MCF 10A (cell line): ENCODE measurements at regions of chr20 and their contacts with region 1.

Region 1: DNA sequence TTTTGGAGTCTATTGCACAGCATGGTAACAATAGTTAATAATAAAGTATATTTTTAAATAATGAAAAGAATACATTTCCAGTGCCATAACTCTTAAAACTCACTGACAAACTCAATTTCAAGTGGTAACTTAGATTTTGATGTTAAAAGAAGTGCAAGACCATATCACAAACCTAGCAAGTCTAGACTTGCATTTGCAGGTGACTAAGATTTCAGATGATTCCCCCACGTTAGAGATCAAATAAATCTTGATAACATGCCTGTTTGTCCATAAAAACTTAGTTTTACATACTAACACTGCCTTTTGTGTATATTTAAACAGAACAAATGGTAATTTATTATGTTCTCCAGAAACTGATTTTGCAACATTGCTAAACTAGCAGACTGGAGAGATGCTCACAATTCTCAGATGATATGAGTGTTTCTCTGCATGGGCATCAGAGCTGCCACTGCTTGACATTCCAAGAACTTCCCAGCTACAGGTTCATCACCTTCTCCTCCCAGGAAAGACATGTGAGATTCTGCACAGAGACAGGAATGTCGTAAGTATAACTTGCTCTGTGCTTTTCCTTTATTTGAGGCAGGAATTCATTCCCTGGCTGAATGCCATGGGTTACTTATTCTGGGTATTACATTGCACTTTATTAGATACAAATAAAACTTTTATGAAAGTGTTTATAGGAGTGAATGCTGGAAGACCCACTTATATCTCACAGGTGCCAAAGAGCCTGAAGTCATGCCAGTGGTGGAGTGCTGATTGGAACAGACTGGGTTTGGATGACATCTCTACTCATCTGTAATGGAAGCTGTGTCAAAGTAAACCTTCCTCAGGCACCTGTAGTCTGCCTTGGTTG is 160.2 kb upstream of the FOXA2 start:
- DNase-seq: peak; percentile 9
- H3K4me3 Mint-ChIP-seq: no peak overlapping the region
- H3K27ac Mint-ChIP-seq: no peak overlapping the region
- H3K4me1 Mint-ChIP-seq: peaks cover 5% of the 10 kb centered on the region
- H3K27me3 Mint-ChIP-seq: no peaks in the 10 kb centered on the region
- CTCF ChIP-seq: no peak

Region 2: DNA sequence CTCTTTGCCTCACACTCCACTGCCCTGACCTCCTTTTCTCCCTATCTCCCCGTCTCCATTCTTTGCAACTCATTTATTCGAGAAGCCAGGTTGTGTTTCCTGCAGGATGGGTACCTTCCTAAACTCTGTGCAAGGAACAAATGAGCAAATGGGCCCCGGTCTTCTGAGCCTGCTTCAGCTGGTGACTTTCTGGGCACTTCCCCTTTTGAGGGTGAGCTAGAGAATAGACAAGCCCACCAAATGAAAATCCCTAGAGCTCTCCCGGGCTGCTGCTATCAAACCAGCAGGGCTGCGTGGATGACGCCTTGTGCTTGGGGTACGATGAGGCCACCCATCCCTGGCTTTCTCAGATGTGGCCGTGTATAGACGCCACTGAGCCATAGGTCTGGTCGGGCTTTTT is 69.2 kb before region 1 on chr20:
- CTCF ChIA-PET with region 1: no interaction called
- POLR2A ChIA-PET with region 1: no interaction called
- intact Hi-C with region 1: no loop called
- DNase-seq: no peak
- H3K4me3 Mint-ChIP-seq: no peak overlapping the region
- H3K27ac Mint-ChIP-seq: no peak overlapping the region
- H3K4me1 Mint-ChIP-seq: no peaks in the 10 kb centered on the region
- H3K27me3 Mint-ChIP-seq: no peaks in the 10 kb centered on the region
- CTCF ChIP-seq: no peak

Region 3: DNA sequence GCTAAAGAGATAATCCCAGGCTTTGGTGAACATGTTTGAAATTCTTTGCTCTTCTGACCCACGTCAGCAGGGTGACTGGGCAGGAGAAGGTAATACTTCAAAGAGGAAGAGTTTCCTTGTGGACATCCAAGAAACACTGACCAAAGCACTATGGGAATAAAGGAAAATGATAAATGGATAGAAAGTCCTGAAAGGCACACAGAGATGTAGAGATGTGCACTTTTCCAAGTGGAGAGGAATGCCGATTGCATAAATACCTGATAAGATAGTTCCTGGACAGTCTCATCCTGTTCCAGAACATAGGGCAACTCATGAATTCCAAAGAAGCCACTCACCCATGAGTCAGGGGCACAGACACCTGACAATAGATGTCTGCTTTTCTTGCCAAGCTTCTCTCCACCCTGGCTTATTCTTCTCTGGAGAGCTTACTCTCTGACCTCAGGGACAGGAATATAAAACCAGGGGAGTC is 31.1 kb after region 1 on chr20:
- CTCF ChIA-PET with region 1: interaction called, 3 read pairs
- POLR2A ChIA-PET with region 1: interaction called, 11 read pairs
- intact Hi-C with region 1: no loop called
- DNase-seq: peak; percentile 88
- H3K4me3 Mint-ChIP-seq: peak overlapping the region; percentile 45
- H3K27ac Mint-ChIP-seq: peak overlapping the region; percentile 72
- H3K4me1 Mint-ChIP-seq: peaks cover 59% of the 10 kb centered on the region
- H3K27me3 Mint-ChIP-seq: no peaks in the 10 kb centered on the region
- CTCF ChIP-seq: no peak